ENCODE measurements at regions of chr22 and their contacts with region 1.

Region 1: DNA sequence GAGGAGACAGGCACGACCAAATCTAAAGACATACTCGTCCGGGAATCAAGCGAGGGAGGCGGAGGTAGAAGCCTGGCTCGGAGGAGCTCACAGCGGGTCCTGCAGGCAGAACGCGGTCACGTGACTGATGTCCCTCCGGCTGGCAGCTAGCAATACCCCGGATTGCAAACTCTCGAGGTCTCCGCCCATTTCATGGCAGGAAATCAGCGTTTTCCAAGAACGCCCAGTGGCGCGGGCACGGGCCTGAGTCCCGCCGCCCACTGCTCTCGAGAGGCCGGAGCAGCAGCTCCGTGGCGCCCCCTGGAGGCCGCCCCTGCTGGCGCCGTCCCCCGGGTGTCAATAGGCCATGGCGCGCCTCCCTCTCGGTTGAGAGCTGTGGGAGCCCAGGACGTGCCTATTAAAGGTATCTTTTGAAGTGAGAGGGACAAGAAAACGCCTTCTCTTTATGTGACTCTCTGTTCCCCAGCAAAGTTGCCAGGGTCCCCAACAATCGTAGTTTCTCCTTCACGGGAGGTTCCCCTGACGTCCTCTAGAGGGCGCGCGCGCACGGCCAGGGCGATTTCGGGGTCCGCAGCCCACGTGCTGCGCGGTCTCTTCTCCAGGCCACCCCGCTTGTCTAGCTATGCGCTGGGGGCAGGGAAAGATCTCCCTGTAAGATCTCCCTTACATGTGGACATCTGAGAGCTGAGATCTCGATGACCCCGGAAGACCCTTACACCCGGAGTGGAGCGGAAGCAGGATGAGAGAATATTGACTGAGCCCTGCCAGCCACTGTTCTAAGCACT is 37.3 kb upstream of the RBFOX2 start:
- DNase-seq: peak; percentile 78
- CTCF ChIP-seq: peak; percentile 80

Region 2: DNA sequence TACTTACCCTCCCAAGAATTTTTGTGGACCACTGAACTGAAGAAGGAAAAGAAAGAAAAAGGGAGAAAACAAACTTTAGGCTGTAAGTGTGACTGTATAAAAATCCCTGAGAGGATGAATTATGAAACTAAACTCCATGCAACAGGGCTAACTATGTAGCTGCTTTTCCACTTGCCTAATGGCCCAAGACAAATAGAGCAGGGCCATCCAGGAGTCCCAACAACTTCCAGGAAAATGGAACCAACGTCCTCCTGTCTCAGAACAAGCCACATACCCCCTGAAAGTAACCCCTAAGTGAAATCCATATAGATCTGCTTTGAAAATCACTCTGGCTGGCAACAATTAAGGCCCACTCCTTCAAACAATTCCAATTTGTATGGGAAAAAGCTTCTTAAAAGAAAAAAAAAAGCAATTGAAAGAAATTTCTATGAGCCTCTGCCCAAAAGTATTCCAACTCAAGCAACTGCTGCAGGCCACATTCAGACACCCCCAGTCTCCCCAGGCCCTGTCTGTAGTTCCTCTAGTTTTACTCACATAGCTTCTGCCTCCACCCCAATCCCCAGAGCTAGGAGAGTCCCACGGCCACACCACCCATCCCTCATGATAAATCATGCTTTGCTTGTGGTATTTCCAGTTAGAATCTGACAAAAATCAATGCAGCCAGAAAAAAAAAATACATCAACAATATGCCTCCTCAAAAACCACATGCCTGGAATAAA is 50.0 kb before region 1 on chr22:
- CTCF ChIA-PET with region 1: interaction called, 15 read pairs
- POLR2A ChIA-PET with region 1: no interaction called
- DNase-seq: no peak
- CTCF ChIP-seq: no peak

Region 3: GRCh38 chr22:36029406-36029755 is 36.6 kb before region 1 on chr22:
- CTCF ChIA-PET with region 1: interaction called, 12 read pairs
- POLR2A ChIA-PET with region 1: no interaction called
- DNase-seq: no peak
- CTCF ChIP-seq: no peak

Region 4: DNA sequence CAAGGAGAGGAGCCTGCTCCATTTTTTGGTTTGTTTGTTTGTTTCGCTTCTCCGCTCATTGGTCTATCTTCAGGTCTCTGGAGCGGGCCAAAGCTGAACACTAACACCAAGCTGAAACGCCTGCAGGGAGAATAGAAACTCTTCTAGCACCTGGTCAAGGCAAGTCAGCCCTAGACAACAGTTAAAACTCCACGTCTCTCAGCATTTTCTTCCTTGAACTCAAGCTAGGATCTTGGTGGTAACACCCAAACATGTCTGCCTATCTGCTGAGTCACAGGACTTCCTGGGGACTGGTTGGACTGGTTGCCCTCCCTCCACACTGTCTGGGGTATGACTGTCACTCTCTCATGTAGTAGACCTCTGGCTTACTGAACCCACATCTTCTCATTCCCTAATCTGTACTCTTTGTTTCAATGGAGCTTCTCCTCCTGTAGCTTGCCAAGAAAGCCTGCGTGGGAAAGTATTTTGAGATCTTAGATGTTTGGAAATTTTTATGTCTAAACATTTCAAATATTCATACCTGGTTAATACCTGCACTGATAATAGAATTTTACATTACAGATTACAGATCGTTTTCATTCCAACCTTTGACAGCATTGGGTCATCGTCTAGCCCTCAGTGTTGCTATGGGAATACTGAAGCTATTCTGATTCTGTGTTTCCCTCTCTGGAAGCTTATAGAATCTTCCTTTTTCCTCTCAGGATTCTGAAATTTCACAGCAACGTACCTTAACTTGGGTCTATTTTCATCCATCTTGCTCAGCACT is 13.3 kb before region 1 on chr22:
- CTCF ChIA-PET with region 1: interaction called, 49 read pairs
- POLR2A ChIA-PET with region 1: no interaction called
- DNase-seq: no peak
- CTCF ChIP-seq: no peak

Region 5: GRCh38 chr22:36123673-36124630 is 58.0 kb after region 1 on chr22:
- CTCF ChIA-PET with region 1: interaction called, 32 read pairs
- POLR2A ChIA-PET with region 1: no interaction called
- DNase-seq: peak; percentile 93
- CTCF ChIP-seq: peak; percentile 97